ENCODE measurements at regions of chr3 and their contacts with region 1.

Region 1: GRCh38 chr3:34260271-34261006 is 462.0 kb downstream of the PDCD6IP start:
- DNase-seq: no peak
- H3K4me3 ChIP-seq: no peak overlapping the region
- CTCF ChIP-seq: peak; percentile 58

Region 2: DNA sequence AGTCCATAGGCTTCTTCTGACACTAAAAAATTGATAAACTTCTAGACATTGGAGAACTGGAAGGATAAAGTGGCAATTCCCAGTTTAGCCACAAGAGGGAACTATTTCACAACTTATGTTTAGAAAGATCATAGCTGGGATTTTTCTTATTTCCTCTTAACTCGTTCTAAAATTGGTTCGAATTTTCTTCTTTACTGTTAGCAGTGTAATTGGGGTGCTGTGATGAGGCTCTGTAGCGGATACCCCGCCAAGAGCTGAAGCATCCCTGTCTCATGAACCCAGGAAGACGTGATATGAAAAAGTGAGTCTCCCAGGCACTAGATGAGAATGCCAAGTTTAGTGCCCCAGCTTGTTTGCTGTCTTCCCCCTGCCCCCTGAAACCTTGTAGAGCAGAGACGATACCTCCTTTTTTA is 376.9 kb before region 1 on chr3:
- CTCF ChIA-PET with region 1: interaction called, 21 read pairs
- POLR2A ChIA-PET with region 1: no interaction called
- DNase-seq: no peak
- H3K4me3 ChIP-seq: no peak overlapping the region
- CTCF ChIP-seq: peak; percentile 56

Region 3: DNA sequence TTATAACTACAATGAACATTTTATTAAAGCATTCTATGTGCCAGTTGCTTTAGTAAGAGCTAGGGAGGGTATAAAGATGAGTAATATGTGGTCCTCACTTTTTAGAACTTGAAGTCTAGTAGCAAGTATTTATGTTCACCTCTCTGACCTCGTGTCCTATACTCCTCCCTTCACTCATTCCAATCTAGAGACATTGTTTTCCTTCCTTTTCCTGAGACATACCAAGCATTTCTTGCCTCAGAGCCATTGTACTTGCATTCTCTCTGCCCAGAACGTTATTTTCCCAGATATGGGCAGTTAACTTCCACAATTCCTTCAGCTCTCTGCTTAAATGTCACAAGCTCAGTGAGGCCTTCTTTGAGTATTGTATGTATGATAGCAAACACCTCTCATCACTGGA is 53.4 kb before region 1 on chr3:
- CTCF ChIA-PET with region 1: interaction called, 10 read pairs
- POLR2A ChIA-PET with region 1: no interaction called
- DNase-seq: peak; percentile 74
- H3K4me3 ChIP-seq: no peak overlapping the region
- CTCF ChIP-seq: no peak

Region 4: GRCh38 chr3:34248352-34248751 is 12.1 kb before region 1 on chr3:
- CTCF ChIA-PET with region 1: interaction called, 50 read pairs
- POLR2A ChIA-PET with region 1: no interaction called
- DNase-seq: no peak
- H3K4me3 ChIP-seq: no peak overlapping the region
- CTCF ChIP-seq: no peak

Region 5: GRCh38 chr3:34683851-34684250 is 423.4 kb after region 1 on chr3:
- CTCF ChIA-PET with region 1: interaction called, 43 read pairs
- POLR2A ChIA-PET with region 1: no interaction called
- DNase-seq: no peak
- H3K4me3 ChIP-seq: no peak overlapping the region
- CTCF ChIP-seq: peak; percentile 41

Measured in AG04449 (cell line).